ENCODE measurements at regions of chr5 and their contacts with region 1.

Region 1: GRCh38 chr5:95620030-95620869 is at the start of gene GPR150:
- DNase-seq: peak; percentile 40 to 79 (median 56)
- ATAC-seq: peak; percentile 68 to 77
- H3K4me3 Mint-ChIP-seq: peak within 1 kb of the TSS; percentile 78 to 96 (median 92)
- H3K27ac Mint-ChIP-seq: peak within 1 kb of the TSS; percentile 36 to 94 (median 84)
- H3K4me1 Mint-ChIP-seq: peaks cover 23 to 70% (median 50%) of the 10 kb centered on the region in 4 donors
- H3K27me3 Mint-ChIP-seq: no peaks in the 10 kb centered on the region
- polyA plus RNA-seq, gene GPR150: 2.1 to 2.3 (median 2.2) TPM

Region 2: GRCh38 chr5:95554647-95555548 is 65.4 kb before region 1 on chr5 and contains the starts of genes ARSK and SKIC3:
- POLR2A ChIA-PET with region 1: interaction called, 10 read pairs
- DNase-seq: peak; percentile 76 to 98 (median 92)
- ATAC-seq: peak; percentile 85 to 90
- H3K4me3 Mint-ChIP-seq: peak within 1 kb of the TSS; percentile 89 to 100 (median 97)
- H3K27ac Mint-ChIP-seq: peak within 1 kb of the TSS; percentile 81 to 99 (median 98)
- H3K4me1 Mint-ChIP-seq: peaks cover 20 to 47% (median 45%) of the 10 kb centered on the region in 4 donors
- H3K27me3 Mint-ChIP-seq: no peaks in the 10 kb centered on the region
- polyA plus RNA-seq, gene ARSK: 9.0 to 12.9 (median 11.4) TPM
- polyA plus RNA-seq, gene SKIC3: 36.7 to 46.1 (median 38.8) TPM

Region 3: DNA sequence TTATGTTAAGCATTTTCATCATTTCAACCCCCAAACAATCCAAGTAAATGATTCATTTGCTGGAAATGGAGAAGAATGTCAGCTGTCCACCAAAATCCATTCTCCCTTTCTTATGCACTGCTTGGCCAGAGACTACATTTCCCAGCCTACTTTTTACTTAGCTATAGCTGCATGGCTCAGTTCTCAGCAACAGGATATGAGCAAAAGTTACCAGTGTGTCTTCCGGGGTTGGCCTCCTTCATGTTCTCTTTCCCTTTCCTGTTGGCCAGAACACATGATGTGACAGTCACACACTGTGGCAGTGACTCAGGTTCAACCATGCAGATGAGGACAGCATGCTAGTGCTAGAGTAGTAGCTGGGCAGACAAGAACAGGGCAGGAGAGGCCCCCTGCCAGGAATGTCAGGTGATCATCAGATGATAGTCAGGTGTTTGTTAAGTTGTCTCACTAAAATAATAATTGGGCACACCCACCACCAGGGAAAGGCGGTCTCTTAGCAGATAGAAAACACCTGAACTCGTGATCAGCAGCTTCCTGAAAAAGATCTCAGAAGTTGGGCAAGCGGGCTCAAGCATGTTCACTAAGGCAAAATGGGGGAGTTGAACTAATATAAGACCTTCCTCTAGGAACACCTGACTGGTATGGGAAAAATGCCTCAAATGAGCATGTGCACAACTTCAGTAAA is 11.9 kb after region 1 on chr5:
- POLR2A ChIA-PET with region 1: interaction called, 30 read pairs
- DNase-seq: peak in 9 of 10 donors; percentile 37 to 81 (median 61)
- ATAC-seq: peak; percentile 100
- H3K4me3 Mint-ChIP-seq: peak overlapping the region in 8 of 10 donors; percentile 20 to 79 (median 44)
- H3K27ac Mint-ChIP-seq: peak overlapping the region; percentile 84 to 96 (median 92)
- H3K4me1 Mint-ChIP-seq: peaks cover 12 to 30% (median 20%) of the 10 kb centered on the region in 4 donors
- H3K27me3 Mint-ChIP-seq: no peaks in the 10 kb centered on the region

Region 4: GRCh38 chr5:95646554-95647431 is 26.5 kb after region 1 on chr5 and contains the start of gene RFESD:
- POLR2A ChIA-PET with region 1: interaction called, 14 read pairs
- DNase-seq: peak; percentile 85 to 95 (median 89)
- ATAC-seq: peak; percentile 92 to 93
- H3K4me3 Mint-ChIP-seq: peak within 1 kb of the TSS; percentile 84 to 94 (median 88)
- H3K27ac Mint-ChIP-seq: peak within 1 kb of the TSS; percentile 71 to 97 (median 94)
- H3K4me1 Mint-ChIP-seq: peaks cover 9 to 41% (median 26%) of the 10 kb centered on the region in 4 donors
- H3K27me3 Mint-ChIP-seq: no peaks in the 10 kb centered on the region
- polyA plus RNA-seq, gene RFESD: 7.2 to 13.4 (median 9.8) TPM

Region 5: GRCh38 chr5:95686651-95687050 is 66.4 kb after region 1 on chr5:
- POLR2A ChIA-PET with region 1: no interaction called
- DNase-seq: no peak
- ATAC-seq: no peak
- H3K4me3 Mint-ChIP-seq: no peak overlapping the region
- H3K27ac Mint-ChIP-seq: no peak overlapping the region
- H3K4me1 Mint-ChIP-seq: no peaks in the 10 kb centered on the region
- H3K27me3 Mint-ChIP-seq: peaks cover 6 to 11% (median 8%) of the 10 kb centered on the region in 5 donors

Region 6: GRCh38 chr5:96439477-96440184 is 819.4 kb after region 1 on chr5:
- POLR2A ChIA-PET with region 1: no interaction called
- DNase-seq: no peak
- ATAC-seq: no peak
- H3K4me3 Mint-ChIP-seq: no peak overlapping the region
- H3K27ac Mint-ChIP-seq: no peak overlapping the region
- H3K4me1 Mint-ChIP-seq: peaks cover 0 to 10% (median 2%) of the 10 kb centered on the region in 4 donors
- H3K27me3 Mint-ChIP-seq: peaks cover 26 to 76% (median 34%) of the 10 kb centered on the region in 5 donors

Measured in naive thymus-derived CD8-positive, alpha-beta T cell (primary cell).